ENCODE measurements at regions of chr4 and their contacts with region 1.

Region 1: GRCh38 chr4:156475322-156475721 is 496.3 kb downstream of the PDGFC start:
- DNase-seq: peak; percentile 15
- ATAC-seq: peak; percentile 75
- H3K4me3 ChIP-seq: no peak overlapping the region
- H3K27ac ChIP-seq: no peak overlapping the region
- H3K4me1 ChIP-seq: no peaks in the 10 kb centered on the region
- H3K27me3 ChIP-seq: no peaks in the 10 kb centered on the region
- CTCF ChIP-seq: peak; percentile 51
- EP300 ChIP-seq: no peak
- POLR2A ChIP-seq: no peak
- RAD21 ChIP-seq: no peak

Region 2: DNA sequence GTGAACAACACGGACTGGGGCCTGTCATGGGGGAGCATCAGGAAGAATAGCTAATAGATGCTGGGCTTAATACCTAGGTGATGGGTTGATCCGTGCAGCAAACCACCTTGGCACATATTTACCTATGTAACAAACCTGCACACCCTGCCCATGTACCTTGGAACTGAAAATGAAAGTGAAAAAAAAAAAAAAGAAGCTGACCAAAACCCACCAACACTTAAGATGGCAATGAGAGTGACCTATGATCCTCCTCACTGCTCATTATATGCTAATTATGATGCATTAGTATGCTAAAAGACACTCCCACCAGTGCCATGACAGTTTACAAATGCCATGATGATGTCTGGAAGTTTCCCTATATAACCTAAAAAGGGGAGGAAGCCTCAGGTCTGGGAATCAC is 18.5 kb before region 1 on chr4:
- CTCF ChIA-PET with region 1: no interaction called
- POLR2A ChIA-PET with region 1: no interaction called
- in situ Hi-C with region 1: no loop called
- intact Hi-C with region 1: no loop called
- DNase-seq: no peak
- ATAC-seq: no peak
- H3K4me3 ChIP-seq: no peak overlapping the region
- H3K27ac ChIP-seq: no peak overlapping the region
- H3K4me1 ChIP-seq: no peaks in the 10 kb centered on the region
- H3K27me3 ChIP-seq: no peaks in the 10 kb centered on the region
- CTCF ChIP-seq: no peak
- EP300 ChIP-seq: no peak
- POLR2A ChIP-seq: no peak
- RAD21 ChIP-seq: no peak

Region 3: DNA sequence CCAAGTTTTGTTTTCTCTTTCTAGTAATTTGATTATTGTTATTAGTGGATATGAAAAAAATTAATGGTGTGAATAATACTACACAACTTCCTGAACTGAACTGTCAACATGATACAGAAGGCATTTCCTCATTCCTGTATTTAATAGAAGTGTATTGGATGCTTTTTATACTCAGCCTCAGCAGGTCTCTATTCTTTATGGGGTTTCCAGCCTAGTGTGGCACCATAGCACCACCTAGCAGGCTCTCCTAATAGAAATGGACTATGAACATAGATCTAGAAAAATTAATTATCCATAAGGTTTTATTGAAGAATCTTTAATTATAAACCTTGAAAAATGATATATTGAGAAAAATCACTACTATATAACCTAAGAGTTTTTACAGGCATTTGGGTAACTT is 653.1 kb after region 1 on chr4:
- CTCF ChIA-PET with region 1: no interaction called
- POLR2A ChIA-PET with region 1: no interaction called
- in situ Hi-C with region 1: no loop called
- intact Hi-C with region 1: loop called (anchors 5 kb)
- DNase-seq: no peak
- ATAC-seq: no peak
- H3K4me3 ChIP-seq: no peak overlapping the region
- H3K27ac ChIP-seq: no peak overlapping the region
- H3K4me1 ChIP-seq: no peaks in the 10 kb centered on the region
- H3K27me3 ChIP-seq: no peaks in the 10 kb centered on the region
- CTCF ChIP-seq: 0 out of 2 replicates have a peak, but pooled peaks have one; percentile 5
- EP300 ChIP-seq: no peak
- POLR2A ChIP-seq: no peak
- RAD21 ChIP-seq: no peak

Region 4: DNA sequence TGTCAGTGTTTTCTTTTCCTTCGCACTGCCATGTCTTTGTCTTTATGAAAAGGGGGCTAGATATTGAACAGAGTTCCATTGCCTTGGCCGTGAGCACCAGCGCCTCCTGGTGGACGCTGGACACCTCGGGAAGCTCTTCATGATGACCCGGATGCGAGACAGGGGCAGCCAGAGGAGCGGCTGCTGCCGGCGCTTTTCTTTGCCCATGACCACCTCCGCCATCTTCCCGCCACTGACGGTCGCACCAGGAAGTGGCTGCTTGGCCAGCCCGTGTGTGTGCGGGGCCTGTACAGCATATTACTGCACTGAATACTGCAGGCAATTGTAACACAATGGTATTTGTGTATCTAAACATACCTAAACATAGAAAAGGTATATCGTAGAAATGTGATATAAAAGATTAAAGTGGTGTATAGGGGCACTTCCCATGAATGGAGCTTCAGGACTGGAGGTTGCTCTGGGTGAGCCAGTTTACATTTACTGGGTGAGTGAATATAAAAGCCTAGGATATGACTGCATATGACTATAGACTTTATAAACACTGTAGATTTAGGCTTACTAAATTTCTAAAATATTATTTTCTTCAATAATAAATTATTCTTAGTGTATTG is 729.4 kb after region 1 on chr4:
- CTCF ChIA-PET with region 1: no interaction called
- POLR2A ChIA-PET with region 1: no interaction called
- in situ Hi-C with region 1: no loop called
- intact Hi-C with region 1: loop called (anchors 1 kb)
- DNase-seq: peak; percentile 24
- ATAC-seq: peak; percentile 94
- H3K4me3 ChIP-seq: no peak overlapping the region
- H3K27ac ChIP-seq: no peak overlapping the region
- H3K4me1 ChIP-seq: no peaks in the 10 kb centered on the region
- H3K27me3 ChIP-seq: no peaks in the 10 kb centered on the region; a peak in 1 of 5 replicates
- CTCF ChIP-seq: peak; percentile 70
- EP300 ChIP-seq: no peak
- POLR2A ChIP-seq: no peak
- RAD21 ChIP-seq: no peak